ENCODE measurements at regions of chr7 and their contacts with region 1.

Region 1: DNA sequence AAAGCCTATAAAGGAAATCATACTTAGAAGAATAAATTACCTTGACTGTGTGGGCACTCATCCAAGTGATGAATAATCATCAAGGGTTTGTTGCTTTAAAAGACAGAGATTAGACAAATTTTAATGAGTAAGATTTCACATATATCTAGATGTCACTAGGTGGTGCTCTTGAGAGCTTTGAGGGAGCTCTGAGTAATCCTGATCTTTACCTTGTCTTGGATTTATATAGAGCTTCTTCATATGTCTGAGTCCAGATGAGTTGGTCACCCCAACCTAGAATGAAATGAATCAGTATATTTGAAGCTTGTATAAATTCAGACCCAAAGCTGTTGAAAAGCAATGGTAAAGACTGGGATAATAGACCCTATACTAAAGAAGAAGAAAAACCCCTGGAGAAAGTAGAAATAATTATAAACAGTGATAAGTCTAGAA is 3.7 kb downstream of the AGR2 start:
- DNase-seq: peak; percentile 18 to 56 (median 36)
- H3K4me3 ChIP-seq: no peak overlapping the region
- H3K4me3 Mint-ChIP-seq: no peak overlapping the region
- H3K27ac ChIP-seq: no peak overlapping the region
- H3K27ac Mint-ChIP-seq: no peak overlapping the region
- H3K4me1 ChIP-seq: no peaks in the 10 kb centered on the region
- H3K4me1 Mint-ChIP-seq: no peaks in the 10 kb centered on the region
- H3K27me3 ChIP-seq: no peaks in the 10 kb centered on the region
- H3K27me3 Mint-ChIP-seq: no peaks in the 10 kb centered on the region
- CTCF ChIP-seq: peak; percentile 73

Region 2: GRCh38 chr7:16881844-16882243 is 80.7 kb after region 1 on chr7 and contains the start of gene AGR3:
- intact Hi-C with region 1: no loop called
- DNase-seq: no peak
- H3K4me3 ChIP-seq: no peak within 1 kb of the TSS
- H3K4me3 Mint-ChIP-seq: no peak within 1 kb of the TSS
- H3K27ac ChIP-seq: no peak within 1 kb of the TSS
- H3K27ac Mint-ChIP-seq: no peak within 1 kb of the TSS
- H3K4me1 ChIP-seq: no peaks in the 10 kb centered on the region
- H3K4me1 Mint-ChIP-seq: no peaks in the 10 kb centered on the region
- H3K27me3 ChIP-seq: no peaks in the 10 kb centered on the region
- H3K27me3 Mint-ChIP-seq: no peaks in the 10 kb centered on the region
- CTCF ChIP-seq: no peak
- polyA plus RNA-seq, gene AGR3: not detected

Region 3: DNA sequence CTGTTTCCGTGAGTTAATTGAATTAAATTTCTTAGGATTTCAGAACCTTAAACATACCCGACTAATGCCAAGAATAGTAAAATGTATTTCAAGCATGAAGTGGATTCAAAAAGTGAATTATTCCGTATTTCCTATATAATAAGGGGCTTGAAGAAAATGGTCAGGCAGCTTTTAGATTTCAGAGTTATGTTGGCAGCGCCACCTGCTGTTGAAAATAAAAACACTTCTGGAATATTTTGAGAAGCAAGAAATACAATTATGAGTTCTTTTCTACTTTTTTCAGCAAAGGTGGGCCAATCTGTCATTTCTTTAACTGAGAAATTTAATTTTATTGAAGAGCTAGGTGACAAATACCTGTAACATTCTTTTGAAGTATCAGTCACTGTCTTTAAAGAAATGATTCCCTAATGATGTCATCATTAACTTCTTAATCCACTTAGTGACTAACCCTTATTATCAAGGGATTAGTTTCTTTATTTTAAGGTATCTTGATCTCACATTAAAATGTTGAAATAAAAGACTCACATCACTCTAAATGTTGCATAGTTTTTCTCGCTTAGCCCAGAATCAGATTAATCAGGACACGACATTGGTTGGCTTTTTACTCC is 117.3 kb after region 1 on chr7:
- intact Hi-C with region 1: loop called (anchors 5 kb)
- DNase-seq: peak in 2 of 3 donors; percentile 23 to 26
- H3K4me3 ChIP-seq: no peak overlapping the region
- H3K4me3 Mint-ChIP-seq: no peak overlapping the region
- H3K27ac ChIP-seq: no peak overlapping the region
- H3K27ac Mint-ChIP-seq: no peak overlapping the region
- H3K4me1 ChIP-seq: no peaks in the 10 kb centered on the region
- H3K4me1 Mint-ChIP-seq: no peaks in the 10 kb centered on the region
- H3K27me3 ChIP-seq: no peaks in the 10 kb centered on the region
- H3K27me3 Mint-ChIP-seq: peaks cover 0 to 1% (median 0%) of the 10 kb centered on the region in 3 donors
- CTCF ChIP-seq: peak; percentile 91

Measured in CD14-positive monocyte (primary cell).